Sigmoid colon (tissue), 7 donors: ENCODE measurements at regions of chr4 and their contacts with region 1.

Region 1: DNA sequence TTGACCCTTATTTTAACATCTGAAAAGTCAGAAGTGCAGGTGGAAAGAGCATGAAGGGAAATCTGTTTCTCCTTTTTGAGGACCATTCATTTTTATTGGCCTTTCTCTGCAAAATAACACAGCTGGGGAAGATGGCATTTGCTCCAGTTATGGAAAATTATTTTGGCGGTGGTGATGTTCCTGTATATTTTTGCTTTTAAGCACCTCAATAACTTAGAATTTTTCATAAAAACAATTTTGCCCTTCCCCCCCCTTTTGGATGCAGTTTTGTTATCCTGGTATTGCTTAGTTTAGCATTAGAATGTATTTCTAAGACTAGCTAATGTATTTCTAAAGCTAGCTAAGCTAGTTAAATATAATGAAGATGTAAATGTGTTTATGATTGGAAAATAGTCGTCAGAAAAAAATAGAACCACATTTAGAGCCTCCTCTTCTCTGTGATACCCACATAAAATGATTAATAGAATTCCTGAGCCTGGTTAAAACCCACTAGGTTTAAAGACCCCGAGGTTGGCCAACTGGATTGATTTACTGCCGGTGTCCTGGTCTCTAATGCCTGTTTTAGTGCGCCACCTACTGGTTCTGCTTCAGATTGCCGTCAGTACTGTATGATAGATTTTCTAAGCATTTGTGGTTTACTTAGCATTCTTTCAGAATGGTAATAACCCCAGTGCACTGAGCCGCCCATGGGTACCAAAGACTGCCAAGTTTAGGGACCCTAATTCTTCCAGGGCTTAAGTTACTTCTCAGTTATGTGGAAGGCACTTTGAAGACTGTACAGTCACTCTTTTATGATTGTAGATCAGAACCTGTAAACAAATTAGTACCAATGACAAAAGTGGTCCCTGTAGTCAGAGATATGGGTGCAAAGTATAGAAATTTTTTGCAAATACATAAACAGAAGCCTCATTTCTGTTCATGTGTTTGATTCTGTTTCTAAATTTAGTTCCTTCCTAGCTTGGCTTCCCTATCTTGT is 11.4 kb downstream of the KLF3 start:
- DNase-seq: peak; percentile 88
- H3K4me3 ChIP-seq: no peak overlapping the region
- H3K27ac ChIP-seq: peak overlapping the region; percentile 99 to 100 (median 100)
- H3K4me1 ChIP-seq: peaks cover 0 to 100% (median 89%) of the 10 kb centered on the region in 4 donors
- H3K27me3 ChIP-seq: no peaks in the 10 kb centered on the region
- CTCF ChIP-seq: peak; percentile 87 to 95 (median 91)
- EP300 ChIP-seq: no peak
- POLR2A ChIP-seq: no peak

Region 2: GRCh38 chr4:37977471-37978247 is 697.8 kb before region 1 on chr4:
- intact Hi-C with region 1: loop called (anchors 10 kb)
- DNase-seq: peak; percentile 90
- H3K4me3 ChIP-seq: peak overlapping the region; percentile 61 to 98 (median 80)
- H3K27ac ChIP-seq: peak overlapping the region; percentile 96 to 98 (median 98)
- H3K4me1 ChIP-seq: peaks cover 0 to 52% (median 47%) of the 10 kb centered on the region in 4 donors
- H3K27me3 ChIP-seq: no peaks in the 10 kb centered on the region
- CTCF ChIP-seq: peak; percentile 63 to 75 (median 72)
- EP300 ChIP-seq: no peak
- POLR2A ChIP-seq: no peak

Region 3: GRCh38 chr4:38179690-38180377 is 495.6 kb before region 1 on chr4:
- intact Hi-C with region 1: loop called (anchors 1 kb)
- DNase-seq: peak; percentile 87
- H3K4me3 ChIP-seq: no peak overlapping the region
- H3K27ac ChIP-seq: peak overlapping the region in 2 of 4 donors; percentile 6 to 43
- H3K4me1 ChIP-seq: peaks cover 0 to 19% (median 8%) of the 10 kb centered on the region in 4 donors
- H3K27me3 ChIP-seq: no peaks in the 10 kb centered on the region
- CTCF ChIP-seq: peak; percentile 67 to 91 (median 86)
- EP300 ChIP-seq: no peak
- POLR2A ChIP-seq: no peak

Region 4: GRCh38 chr4:38266616-38267015 is 408.8 kb before region 1 on chr4:
- intact Hi-C with region 1: no loop called
- DNase-seq: no peak
- H3K4me3 ChIP-seq: no peak overlapping the region
- H3K27ac ChIP-seq: no peak overlapping the region
- H3K4me1 ChIP-seq: peaks cover 0 to 5% (median 0%) of the 10 kb centered on the region in 4 donors
- H3K27me3 ChIP-seq: no peaks in the 10 kb centered on the region
- CTCF ChIP-seq: no peak
- EP300 ChIP-seq: no peak
- POLR2A ChIP-seq: no peak

Region 5: GRCh38 chr4:38503689-38504395 is 171.6 kb before region 1 on chr4:
- intact Hi-C with region 1: loop called (anchors 5 kb)
- DNase-seq: no peak
- H3K4me3 ChIP-seq: no peak overlapping the region
- H3K27ac ChIP-seq: no peak overlapping the region
- H3K4me1 ChIP-seq: peaks cover 0 to 21% (median 7%) of the 10 kb centered on the region in 4 donors
- H3K27me3 ChIP-seq: no peaks in the 10 kb centered on the region
- CTCF ChIP-seq: no peak
- EP300 ChIP-seq: no peak
- POLR2A ChIP-seq: no peak

Region 6: DNA sequence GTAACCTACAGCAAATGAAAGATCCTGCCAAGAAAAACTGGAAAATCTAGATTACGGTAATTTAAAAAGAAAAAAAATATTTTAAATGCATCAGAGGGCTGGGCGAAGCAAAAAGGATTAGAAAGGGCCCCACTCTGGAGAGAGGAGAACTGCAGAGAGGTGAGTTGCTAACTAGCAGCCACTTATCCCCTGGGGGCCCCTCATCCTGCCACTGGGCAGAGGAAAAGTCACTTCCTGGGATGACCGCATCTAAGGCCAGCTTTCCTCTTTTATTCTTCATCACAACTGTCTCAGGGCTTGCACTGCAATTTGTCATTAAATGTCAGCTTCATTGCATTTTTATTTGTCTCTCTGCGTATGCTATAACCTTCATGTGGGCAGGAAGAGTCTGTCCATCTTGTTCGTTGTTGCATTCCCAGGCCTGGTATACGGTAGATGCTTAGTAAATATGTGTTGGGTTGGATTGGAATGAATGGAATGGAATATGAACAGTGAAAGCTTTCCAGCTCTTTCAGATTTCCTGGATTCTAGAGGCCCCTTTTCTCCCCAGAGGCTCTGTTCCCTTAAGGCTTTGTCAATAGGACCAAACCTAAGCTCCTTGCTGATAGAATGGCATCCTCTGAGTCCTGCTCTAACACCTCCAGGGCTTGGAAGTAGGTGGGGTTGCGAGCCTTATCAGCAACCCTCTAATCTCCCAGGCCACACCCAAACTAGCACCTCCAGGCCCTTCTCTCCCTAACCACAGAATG is 48.5 kb after region 1 on chr4:
- intact Hi-C with region 1: no loop called
- DNase-seq: no peak
- H3K4me3 ChIP-seq: no peak overlapping the region
- H3K27ac ChIP-seq: no peak overlapping the region
- H3K4me1 ChIP-seq: no peaks in the 10 kb centered on the region
- H3K27me3 ChIP-seq: no peaks in the 10 kb centered on the region
- CTCF ChIP-seq: no peak
- EP300 ChIP-seq: no peak
- POLR2A ChIP-seq: no peak

Region 7: GRCh38 chr4:38867478-38868058 is 192.1 kb after region 1 on chr4 and contains the start of gene FAM114A1:
- intact Hi-C with region 1: loop called (anchors 10 kb)
- DNase-seq: peak; percentile 91
- H3K4me3 ChIP-seq: peak within 1 kb of the TSS; percentile 77 to 94 (median 90)
- H3K27ac ChIP-seq: peak within 1 kb of the TSS; percentile 92 to 99 (median 97)
- H3K4me1 ChIP-seq: peaks cover 0 to 51% (median 43%) of the 10 kb centered on the region in 4 donors
- H3K27me3 ChIP-seq: no peaks in the 10 kb centered on the region
- CTCF ChIP-seq: no peak
- EP300 ChIP-seq: no peak
- POLR2A ChIP-seq: peak; percentile 31 to 71
- total RNA-seq, gene FAM114A1: 120 to 189 (median 134) TPM